WTC11 (cell line): ENCODE measurements at regions of chr7 and their contacts with region 1.

Region 1: GRCh38 chr7:99036546-99037111 is 107.3 kb downstream of the SMURF1 start:
- DNase-seq: peak; percentile 78
- ATAC-seq: peak; percentile 87
- H3K4me3 Mint-ChIP-seq: no peak overlapping the region
- H3K27ac Mint-ChIP-seq: no peak overlapping the region; the same call in none of the 2 replicates
- H3K4me1 Mint-ChIP-seq: 0 out of 2 replicates have a peak, but pooled peaks cover 3% of the 10 kb centered on the region
- H3K27me3 Mint-ChIP-seq: no peaks in the 10 kb centered on the region
- CTCF ChIP-seq: peak; percentile 41

Region 2: GRCh38 chr7:99072126-99072525 is 35.5 kb after region 1 on chr7:
- CTCF ChIA-PET with region 1: no interaction called
- POLR2A ChIA-PET with region 1: no interaction called
- DNase-seq: no peak
- ATAC-seq: no peak
- H3K4me3 Mint-ChIP-seq: no peak overlapping the region
- H3K27ac Mint-ChIP-seq: no peak overlapping the region
- H3K4me1 Mint-ChIP-seq: peaks cover 6% of the 10 kb centered on the region; the same call in 1 of the 2 replicates
- H3K27me3 Mint-ChIP-seq: no peaks in the 10 kb centered on the region
- CTCF ChIP-seq: no peak

Region 3: GRCh38 chr7:99312316-99313203 is 275.9 kb after region 1 on chr7:
- CTCF ChIA-PET with region 1: interaction called, 14 read pairs
- POLR2A ChIA-PET with region 1: no interaction called
- DNase-seq: peak; percentile 75
- ATAC-seq: peak; percentile 74
- H3K4me3 Mint-ChIP-seq: no peak overlapping the region
- H3K27ac Mint-ChIP-seq: no peak overlapping the region
- H3K4me1 Mint-ChIP-seq: no peaks in the 10 kb centered on the region
- H3K27me3 Mint-ChIP-seq: no peaks in the 10 kb centered on the region
- CTCF ChIP-seq: peak; percentile 89

Region 4: GRCh38 chr7:99325545-99326407 is 289.1 kb after region 1 on chr7 and contains the start of gene ARPC1A:
- CTCF ChIA-PET with region 1: interaction called, 11 read pairs
- POLR2A ChIA-PET with region 1: no interaction called
- DNase-seq: peak; percentile 93
- ATAC-seq: peak; percentile 96
- H3K4me3 Mint-ChIP-seq: peak within 1 kb of the TSS; percentile 80
- H3K27ac Mint-ChIP-seq: peak within 1 kb of the TSS; percentile 42
- H3K4me1 Mint-ChIP-seq: peaks cover 14% of the 10 kb centered on the region
- H3K27me3 Mint-ChIP-seq: no peaks in the 10 kb centered on the region
- CTCF ChIP-seq: no peak
- total RNA-seq, gene ARPC1A: 149 to 160 TPM (median 150 TPM) in 3 replicates